IMR-90 (cell line): ENCODE measurements at regions of chr15 and their contacts with region 1.

Region 1: DNA sequence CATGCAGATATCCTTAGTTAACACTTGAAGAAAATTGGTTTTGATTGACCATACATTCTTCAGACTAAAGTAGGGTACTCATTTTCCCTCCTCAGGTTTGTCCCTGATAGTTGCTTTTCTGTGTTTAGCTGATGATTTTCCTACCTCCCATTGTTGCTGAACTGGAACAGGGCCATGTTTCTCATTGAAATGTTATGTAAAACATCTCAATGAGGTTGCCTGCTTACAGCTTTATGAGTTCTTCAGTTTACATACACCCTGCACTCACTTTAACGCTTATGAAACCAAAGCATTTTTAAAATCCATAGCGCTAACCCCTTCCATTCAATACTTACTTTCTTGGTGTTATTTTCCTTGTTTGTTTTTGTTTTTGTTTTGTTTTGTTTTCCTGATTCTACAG is 61.9 kb downstream of the HMG20A start:
- DNase-seq: peak; percentile 86
- ATAC-seq: peak; percentile 82
- H3K4me3 ChIP-seq: no peak overlapping the region
- H3K27ac ChIP-seq: no peak overlapping the region; the same call in 1 of the 2 replicates
- H3K4me1 ChIP-seq: peaks cover 25% of the 10 kb centered on the region
- H3K27me3 ChIP-seq: no peaks in the 10 kb centered on the region
- CTCF ChIP-seq: no peak
- POLR2A ChIP-seq: no peak
- RAD21 ChIP-seq: no peak

Region 2: GRCh38 chr15:77024271-77025082 is 458.1 kb before region 1 on chr15:
- CTCF ChIA-PET with region 1: no interaction called
- POLR2A ChIA-PET with region 1: no interaction called
- dilution Hi-C with region 1: no loop called
- in situ Hi-C with region 1: no loop called
- intact Hi-C with region 1: no loop called
- DNase-seq: peak; percentile 27
- ATAC-seq: peak; percentile 74
- H3K4me3 ChIP-seq: no peak overlapping the region
- H3K27ac ChIP-seq: no peak overlapping the region
- H3K4me1 ChIP-seq: peaks cover 12% of the 10 kb centered on the region
- H3K27me3 ChIP-seq: no peaks in the 10 kb centered on the region; the same call in 1 of the 2 replicates
- CTCF ChIP-seq: peak; percentile 87
- POLR2A ChIP-seq: no peak
- RAD21 ChIP-seq: peak; percentile 81

Region 3: DNA sequence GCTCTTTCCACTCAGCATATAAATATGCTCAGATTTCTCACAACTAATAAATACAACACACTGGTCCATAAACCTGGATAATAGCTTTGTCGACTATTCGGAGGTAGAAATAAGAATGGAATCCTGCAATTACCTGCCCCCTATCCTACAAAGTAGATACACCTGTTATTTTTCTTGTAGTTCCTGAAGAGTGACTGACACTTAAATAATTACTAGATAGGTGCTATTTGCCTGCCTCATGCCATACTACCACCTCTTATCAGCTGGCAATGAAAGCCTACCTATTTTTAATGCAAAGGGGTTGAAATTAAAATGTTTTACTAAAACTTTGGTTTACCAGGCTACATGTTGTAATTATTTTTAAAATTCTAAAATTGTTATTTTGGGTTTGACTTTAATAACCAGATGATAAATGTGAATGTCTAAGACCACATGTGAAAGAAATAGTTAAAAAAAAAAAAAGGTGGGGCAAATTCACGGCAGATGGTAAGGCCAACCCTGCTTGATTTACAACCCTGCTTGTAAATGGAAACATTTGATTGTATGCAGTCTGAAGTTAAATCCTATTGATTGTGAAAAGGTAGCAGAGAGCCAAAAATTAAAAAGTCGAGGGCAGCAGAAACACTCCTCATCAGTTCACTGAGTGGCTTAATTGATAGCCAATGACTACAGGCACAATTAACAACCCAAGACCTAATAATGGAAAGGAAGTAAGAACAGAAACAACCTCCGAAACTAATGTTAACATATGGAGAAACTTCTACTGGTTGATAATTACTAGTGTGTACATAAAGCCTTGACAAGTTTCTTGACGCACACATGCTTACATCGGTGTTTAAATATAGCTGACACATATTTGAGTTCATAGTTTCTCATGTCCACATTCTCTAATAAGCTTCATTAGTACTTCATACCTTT is 71.6 kb before region 1 on chr15:
- CTCF ChIA-PET with region 1: no interaction called
- POLR2A ChIA-PET with region 1: no interaction called
- dilution Hi-C with region 1: no loop called
- in situ Hi-C with region 1: no loop called
- intact Hi-C with region 1: no loop called
- DNase-seq: no peak
- ATAC-seq: no peak
- H3K4me3 ChIP-seq: no peak overlapping the region
- H3K27ac ChIP-seq: no peak overlapping the region
- H3K4me1 ChIP-seq: peaks cover 4% of the 10 kb centered on the region
- H3K27me3 ChIP-seq: no peaks in the 10 kb centered on the region
- CTCF ChIP-seq: no peak
- POLR2A ChIP-seq: no peak
- RAD21 ChIP-seq: no peak

Region 4: GRCh38 chr15:77455696-77456321 is 26.8 kb before region 1 on chr15:
- CTCF ChIA-PET with region 1: no interaction called
- POLR2A ChIA-PET with region 1: no interaction called
- dilution Hi-C with region 1: no loop called
- in situ Hi-C with region 1: no loop called
- intact Hi-C with region 1: loop called (anchors 2 kb)
- DNase-seq: peak; percentile 87
- ATAC-seq: peak; percentile 74
- H3K4me3 ChIP-seq: no peak overlapping the region
- H3K27ac ChIP-seq: peak overlapping the region; percentile 78
- H3K4me1 ChIP-seq: peaks cover 25% of the 10 kb centered on the region
- H3K27me3 ChIP-seq: no peaks in the 10 kb centered on the region
- CTCF ChIP-seq: no peak
- POLR2A ChIP-seq: no peak
- RAD21 ChIP-seq: no peak